Colonic mucosa (tissue), 4 donors: ENCODE measurements at regions of chr18 and their contacts with region 1.

Region 1: DNA sequence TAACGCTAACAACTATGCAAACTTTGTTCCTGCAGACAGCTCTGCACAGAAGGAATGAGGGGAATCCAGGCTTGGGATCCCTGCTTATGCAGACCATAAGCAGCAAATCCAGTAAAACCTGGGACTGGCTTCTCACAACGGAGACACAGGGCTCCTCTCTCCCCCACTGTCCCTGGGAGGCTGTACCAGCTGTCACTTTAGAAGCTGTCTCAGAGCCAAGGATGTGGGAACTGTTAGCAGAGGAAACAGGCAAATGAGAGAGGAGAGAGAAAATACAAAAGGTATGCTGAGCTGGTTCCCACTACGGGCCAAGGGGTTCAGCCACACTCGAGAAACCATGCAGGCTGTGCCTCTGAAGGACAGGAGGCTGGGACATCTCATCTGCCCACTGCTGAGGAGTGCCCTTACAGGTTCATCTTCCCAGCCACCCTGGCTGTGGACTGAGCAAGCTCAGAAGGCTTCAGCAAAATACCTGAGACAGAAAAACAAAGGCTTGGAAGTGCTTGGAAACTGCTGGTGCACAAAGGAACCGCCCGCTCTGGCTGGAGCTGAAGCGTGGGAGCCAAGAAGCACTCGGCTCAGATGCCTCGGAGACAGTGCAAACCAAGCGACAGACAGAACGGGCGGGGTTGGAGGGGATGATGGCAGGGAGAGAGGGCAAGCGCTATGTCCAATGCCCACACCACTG is 72.5 kb downstream of the FAM210A start:
- DNase-seq: no peak
- H3K4me3 ChIP-seq: no peak overlapping the region
- H3K27ac ChIP-seq: no peak overlapping the region
- H3K4me1 ChIP-seq: no peaks in the 10 kb centered on the region
- H3K27me3 ChIP-seq: no peaks in the 10 kb centered on the region
- CTCF ChIP-seq: no peak

Region 2: DNA sequence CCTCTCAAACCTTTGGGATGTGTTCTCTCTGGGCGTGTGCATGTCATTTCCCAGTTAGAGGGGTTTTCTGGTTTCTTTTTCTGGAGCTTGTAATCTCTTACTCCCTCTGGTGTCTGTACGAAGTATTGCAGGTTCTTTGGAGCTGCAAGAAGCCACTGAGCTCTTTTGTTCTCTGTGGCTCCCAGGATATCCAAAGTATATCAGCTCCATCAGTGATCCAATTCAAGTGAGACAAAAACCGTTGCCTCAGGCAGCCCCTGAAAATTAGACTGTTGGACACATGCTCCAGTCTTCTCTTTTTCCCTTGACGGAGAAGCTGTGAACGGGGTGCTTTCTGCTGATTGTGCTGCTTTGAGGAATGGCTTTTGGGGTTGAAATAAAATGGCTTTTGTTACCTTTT is 494.3 kb before region 1 on chr18:
- intact Hi-C with region 1: no loop called
- DNase-seq: no peak
- H3K4me3 ChIP-seq: no peak overlapping the region
- H3K27ac ChIP-seq: no peak overlapping the region
- H3K4me1 ChIP-seq: no peaks in the 10 kb centered on the region
- H3K27me3 ChIP-seq: no peaks in the 10 kb centered on the region
- CTCF ChIP-seq: peak; percentile 80

Region 3: DNA sequence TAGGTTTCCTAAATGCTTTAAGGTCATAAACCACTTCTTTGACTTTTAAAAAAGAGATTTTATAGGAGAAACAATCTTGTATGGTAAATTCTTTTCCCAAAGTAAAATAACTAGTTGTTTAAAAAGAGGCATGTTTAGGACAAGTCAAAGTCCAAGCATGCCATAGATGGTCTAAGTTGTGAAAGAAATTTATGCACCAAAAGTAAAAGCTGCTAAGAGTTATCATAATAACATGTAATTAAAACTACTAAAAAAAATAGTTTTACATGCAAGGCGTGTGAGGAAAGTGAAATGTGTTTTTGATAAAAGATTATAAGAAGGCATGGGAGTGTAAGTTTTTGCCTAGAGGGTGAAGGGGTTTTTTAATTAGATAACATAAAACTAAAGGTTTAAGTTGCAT is 50.0 kb after region 1 on chr18:
- intact Hi-C with region 1: loop called (anchors 10 kb)
- DNase-seq: no peak
- H3K4me3 ChIP-seq: no peak overlapping the region
- H3K27ac ChIP-seq: no peak overlapping the region
- H3K4me1 ChIP-seq: no peaks in the 10 kb centered on the region
- H3K27me3 ChIP-seq: no peaks in the 10 kb centered on the region
- CTCF ChIP-seq: no peak